ENCODE measurements at regions of chr3 and their contacts with region 1.

Region 1: GRCh38 chr3:101803173-101803782 is 24.3 kb downstream of the NXPE3 start:
- DNase-seq: peak; percentile 54
- H3K4me3 ChIP-seq: no peak overlapping the region
- H3K27ac ChIP-seq: no peak overlapping the region
- H3K27me3 ChIP-seq: no peaks in the 10 kb centered on the region
- CTCF ChIP-seq: peak; percentile 86

Region 2: GRCh38 chr3:101784855-101785613 is 18.2 kb before region 1 on chr3:
- CTCF ChIA-PET with region 1: interaction called, 26 read pairs
- POLR2A ChIA-PET with region 1: no interaction called
- DNase-seq: no peak
- H3K4me3 ChIP-seq: no peak overlapping the region
- H3K27ac ChIP-seq: no peak overlapping the region
- H3K27me3 ChIP-seq: no peaks in the 10 kb centered on the region
- CTCF ChIP-seq: no peak

Region 3: DNA sequence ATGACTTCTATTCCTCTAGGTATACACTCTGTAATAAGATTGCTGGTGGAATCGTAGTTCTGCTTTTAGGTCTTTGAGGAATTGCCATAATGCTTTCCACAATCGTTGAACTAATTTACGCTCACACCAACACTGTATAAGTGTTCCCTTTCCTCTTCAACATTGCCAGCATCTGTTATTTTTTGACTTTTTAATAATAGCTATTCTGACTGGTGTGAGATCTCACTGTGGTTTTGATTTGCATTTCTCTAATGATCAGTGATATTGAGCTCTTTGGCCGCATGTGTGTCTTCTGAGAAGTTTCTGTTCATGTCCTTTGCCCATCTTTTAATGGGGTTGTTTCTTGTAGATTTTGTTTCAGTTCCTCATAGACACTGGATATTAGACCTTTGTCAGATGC is 11.5 kb before region 1 on chr3:
- CTCF ChIA-PET with region 1: interaction called, 39 read pairs
- POLR2A ChIA-PET with region 1: no interaction called
- DNase-seq: no peak
- H3K4me3 ChIP-seq: no peak overlapping the region
- H3K27ac ChIP-seq: no peak overlapping the region
- H3K27me3 ChIP-seq: no peaks in the 10 kb centered on the region
- CTCF ChIP-seq: no peak

Region 4: DNA sequence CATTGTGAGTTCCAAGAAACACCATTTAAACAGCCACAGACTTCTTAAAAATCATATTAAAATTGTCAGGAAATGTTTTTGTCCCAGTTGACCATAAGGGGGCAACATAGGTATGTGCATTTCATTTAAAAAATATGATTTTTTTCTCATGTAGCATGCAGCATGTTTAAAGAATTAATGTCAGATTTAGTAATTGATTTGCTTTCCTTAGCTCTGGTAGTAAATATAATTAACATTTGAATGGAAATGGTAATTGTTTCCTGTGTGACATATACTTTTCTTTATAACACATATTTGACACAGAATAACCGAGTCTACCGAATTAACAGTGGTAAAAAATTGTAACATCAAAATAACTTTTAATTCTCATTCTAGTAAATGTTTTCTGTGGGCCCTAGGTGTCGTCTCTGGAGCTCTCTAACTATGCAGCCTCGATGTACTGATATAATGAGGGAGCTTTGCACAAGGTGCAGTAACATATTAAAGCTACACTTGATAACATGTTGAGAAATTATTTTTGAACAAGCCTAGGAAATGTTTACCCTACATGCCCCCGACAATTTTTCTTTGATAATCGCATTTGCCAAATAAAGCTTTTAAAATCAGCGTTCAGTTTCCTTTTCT is 10.7 kb after region 1 on chr3:
- CTCF ChIA-PET with region 1: interaction called, 28 read pairs
- POLR2A ChIA-PET with region 1: no interaction called
- DNase-seq: no peak
- H3K4me3 ChIP-seq: no peak overlapping the region
- H3K27ac ChIP-seq: no peak overlapping the region
- H3K27me3 ChIP-seq: no peaks in the 10 kb centered on the region
- CTCF ChIP-seq: peak; percentile 53

Region 5: DNA sequence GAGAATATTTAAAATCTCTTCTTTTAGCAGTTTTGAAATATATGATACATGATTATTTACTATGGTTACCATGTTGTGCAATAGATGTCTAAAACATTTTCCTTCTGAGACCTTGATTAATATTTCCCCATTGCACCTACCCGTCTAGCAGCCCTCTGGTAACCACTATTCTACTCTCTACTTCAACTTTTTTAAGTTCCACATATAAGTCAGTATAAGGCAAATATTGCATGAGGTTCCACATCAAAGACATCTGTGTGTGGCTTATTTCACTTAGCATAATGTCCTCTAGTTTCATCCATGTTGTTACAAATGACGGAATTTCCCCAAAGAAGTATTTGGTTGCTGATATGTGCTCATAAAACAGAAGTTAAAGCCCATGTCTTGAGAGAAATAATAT is 16.5 kb after region 1 on chr3:
- CTCF ChIA-PET with region 1: interaction called, 19 read pairs
- POLR2A ChIA-PET with region 1: no interaction called
- DNase-seq: no peak
- H3K4me3 ChIP-seq: no peak overlapping the region
- H3K27ac ChIP-seq: no peak overlapping the region
- H3K27me3 ChIP-seq: no peaks in the 10 kb centered on the region
- CTCF ChIP-seq: no peak

Region 6: DNA sequence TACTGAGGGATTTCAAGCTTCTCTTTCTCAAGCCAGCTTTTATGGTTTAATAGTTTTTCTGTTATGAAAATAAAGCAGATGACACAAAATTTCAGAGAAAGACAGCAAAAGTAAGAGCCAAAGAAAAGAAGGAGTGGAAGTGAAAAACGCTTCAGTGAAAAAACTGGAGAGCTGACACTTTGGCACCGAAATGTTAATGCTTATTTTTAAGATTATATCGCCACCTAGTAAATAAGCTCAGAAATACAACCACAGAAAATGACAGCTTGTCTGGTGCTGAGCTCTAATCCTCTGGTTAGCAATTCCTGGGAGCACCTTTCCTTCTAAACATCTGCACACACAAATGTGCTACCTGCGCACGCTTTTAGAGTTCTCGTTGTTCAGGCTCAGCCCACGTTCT is 733.2 kb after region 1 on chr3:
- CTCF ChIA-PET with region 1: interaction called, 15 read pairs
- POLR2A ChIA-PET with region 1: interaction called, 6 read pairs
- DNase-seq: peak; percentile 4
- H3K4me3 ChIP-seq: no peak overlapping the region
- H3K27ac ChIP-seq: no peak overlapping the region
- H3K27me3 ChIP-seq: no peaks in the 10 kb centered on the region
- CTCF ChIP-seq: peak; percentile 48

Measured in AG04450 (cell line).